ENCODE measurements at regions of chr9 and their contacts with region 1.

Region 1: GRCh38 chr9:126228781-126229444 is 97.7 kb upstream of the MVB12B start:
- DNase-seq: peak; percentile 72 to 89
- H3K4me3 ChIP-seq: no peak overlapping the region
- H3K27ac ChIP-seq: no peak overlapping the region
- H3K4me1 ChIP-seq: peaks cover 0 to 7% (median 3%) of the 10 kb centered on the region in 4 donors
- H3K27me3 ChIP-seq: peaks cover 0 to 51% (median 10%) of the 10 kb centered on the region in 3 donors
- CTCF ChIP-seq: peak in 5 of 7 experiments; percentile 81 to 97 (median 88)
- EP300 ChIP-seq: no peak
- POLR2A ChIP-seq: no peak

Region 2: DNA sequence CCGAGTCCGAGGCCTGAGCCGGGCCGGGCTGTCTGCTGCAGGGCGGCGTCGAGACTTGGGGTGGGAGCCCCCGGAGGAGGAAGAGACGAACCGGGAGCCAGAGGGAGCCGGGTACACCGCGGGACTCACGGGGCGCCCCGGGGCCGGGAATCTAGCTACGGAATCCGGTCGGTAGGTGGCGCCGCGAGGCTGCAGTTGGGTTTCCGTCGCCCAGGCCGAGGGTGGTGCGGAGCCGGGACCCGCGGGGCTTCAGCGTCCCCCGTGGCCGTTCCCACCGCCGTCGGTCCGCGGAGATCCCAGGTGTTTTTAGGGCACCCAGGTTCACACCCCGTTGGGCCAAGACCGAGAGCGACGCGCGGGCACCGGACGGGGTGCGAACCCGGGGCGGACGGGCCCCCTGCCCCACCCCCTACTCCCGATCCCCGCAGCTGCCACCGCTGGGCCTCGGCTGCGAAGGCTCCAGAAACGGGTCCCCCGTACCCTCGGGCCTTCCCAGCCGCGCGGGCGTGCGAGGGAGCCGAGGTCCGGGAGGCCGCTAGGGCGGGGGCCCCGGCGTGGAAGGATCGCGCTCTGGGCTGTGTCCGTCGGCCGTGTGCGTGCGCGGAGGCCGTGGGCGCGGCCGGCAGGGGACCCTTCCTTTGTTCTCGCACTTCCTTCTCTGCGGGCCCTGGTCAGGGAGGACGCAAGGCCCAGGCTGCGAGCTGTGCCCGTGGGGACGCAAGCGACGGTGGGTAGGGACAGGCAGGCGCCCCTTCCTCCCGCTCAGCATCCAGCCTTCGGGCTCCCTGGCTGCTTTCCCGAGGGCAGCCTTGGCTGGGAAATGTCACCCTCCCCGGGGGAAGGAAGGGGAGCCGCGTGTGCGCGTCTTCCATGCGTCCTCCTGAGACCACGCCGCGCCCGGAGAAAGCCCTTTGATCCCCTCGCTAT is 820.7 kb before region 1 on chr9:
- intact Hi-C with region 1: loop called (anchors 5 kb)
- DNase-seq: peak; percentile 77 to 92
- H3K4me3 ChIP-seq: peak overlapping the region; percentile 67 to 75 (median 70)
- H3K27ac ChIP-seq: peak overlapping the region; percentile 5 to 71 (median 64)
- H3K4me1 ChIP-seq: peaks cover 11 to 16% (median 13%) of the 10 kb centered on the region in 4 donors
- H3K27me3 ChIP-seq: peaks cover 0 to 25% (median 23%) of the 10 kb centered on the region in 3 donors
- CTCF ChIP-seq: peak in 6 of 7 experiments; percentile 7 to 86 (median 65)
- EP300 ChIP-seq: no peak
- POLR2A ChIP-seq: no peak

Measured in stomach (tissue), 19 donors.